A673 (cell line): ENCODE measurements at regions of chr9 and their contacts with region 1.

Region 1: GRCh38 chr9:68949271-68950000 is 64.5 kb downstream of the PRKACG start:
- DNase-seq: peak; percentile 44
- H3K4me3 ChIP-seq: no peak overlapping the region
- H3K27ac ChIP-seq: no peak overlapping the region
- H3K4me1 ChIP-seq: no peaks in the 10 kb centered on the region
- H3K27me3 ChIP-seq: peaks cover 65% of the 10 kb centered on the region
- CTCF ChIP-seq: peak; percentile 65

Region 2: GRCh38 chr9:68931821-68932220 is 17.6 kb before region 1 on chr9:
- CTCF ChIA-PET with region 1: no interaction called
- POLR2A ChIA-PET with region 1: no interaction called
- intact Hi-C with region 1: loop called (anchors 2 kb)
- DNase-seq: no peak
- H3K4me3 ChIP-seq: no peak overlapping the region
- H3K27ac ChIP-seq: no peak overlapping the region
- H3K4me1 ChIP-seq: no peaks in the 10 kb centered on the region
- H3K27me3 ChIP-seq: peaks cover 39% of the 10 kb centered on the region
- CTCF ChIP-seq: no peak

Region 3: GRCh38 chr9:69027355-69028096 is 78.1 kb after region 1 on chr9:
- CTCF ChIA-PET with region 1: no interaction called
- POLR2A ChIA-PET with region 1: no interaction called
- intact Hi-C with region 1: no loop called
- DNase-seq: peak; percentile 71
- H3K4me3 ChIP-seq: no peak overlapping the region
- H3K27ac ChIP-seq: no peak overlapping the region
- H3K4me1 ChIP-seq: no peaks in the 10 kb centered on the region
- H3K27me3 ChIP-seq: peaks cover 12% of the 10 kb centered on the region
- CTCF ChIP-seq: peak; percentile 85